Mammary epithelial cell (primary cell): ENCODE measurements at regions of chr12 and their contacts with region 1.

Region 1: DNA sequence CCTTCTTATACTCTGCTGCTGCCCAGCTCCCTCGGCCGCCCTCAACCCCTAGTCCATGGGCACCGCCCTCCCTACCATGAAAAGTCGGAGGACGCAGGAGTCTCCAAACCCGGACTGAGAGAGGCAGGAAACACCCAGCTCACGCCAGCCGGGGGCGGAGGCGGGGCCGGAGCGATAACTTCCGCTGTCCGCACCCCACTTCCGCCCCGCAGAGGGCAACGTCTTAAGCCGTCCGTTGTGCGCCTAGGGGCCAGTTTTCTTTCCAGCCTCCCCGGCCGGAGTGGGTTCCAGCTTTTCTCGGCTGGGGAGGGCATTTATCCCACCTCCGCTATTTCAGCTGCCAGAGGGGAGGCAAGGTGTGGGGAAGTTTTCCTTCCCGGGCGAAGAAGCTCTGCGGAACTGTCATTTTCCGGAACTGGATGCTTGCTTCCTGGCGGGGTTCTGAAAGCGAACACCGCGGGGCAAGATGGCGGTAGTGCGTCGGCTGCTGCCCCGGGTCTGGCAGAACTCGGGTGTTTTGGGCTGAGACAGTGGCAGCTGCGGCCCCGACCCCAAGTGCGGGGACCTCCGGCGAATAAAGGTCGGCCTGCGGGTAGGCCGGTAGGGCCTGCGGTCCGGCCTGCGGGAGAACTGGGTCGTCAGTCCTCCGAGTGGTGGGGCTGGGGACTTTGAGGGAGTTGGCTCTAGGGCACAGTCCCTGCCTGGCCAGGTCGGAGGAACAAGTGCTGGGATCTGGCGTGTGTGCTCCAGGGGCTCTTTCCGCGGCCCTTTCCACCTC is at the starts of genes KCTD10 and UBE3B:
- DNase-seq: peak; percentile 84
- H3K4me3 ChIP-seq: peak within 1 kb of the TSS; percentile 75 to 85 (median 76)
- H3K27ac ChIP-seq: peak within 1 kb of the TSS; percentile 88
- H3K4me1 ChIP-seq: peaks cover 29% of the 10 kb centered on the region
- H3K27me3 ChIP-seq: no peaks in the 10 kb centered on the region
- CTCF ChIP-seq: no peak
- total RNA-seq, gene KCTD10: 71.2 to 125 TPM
- total RNA-seq, gene UBE3B: 31.2 to 53.7 TPM

Region 2: DNA sequence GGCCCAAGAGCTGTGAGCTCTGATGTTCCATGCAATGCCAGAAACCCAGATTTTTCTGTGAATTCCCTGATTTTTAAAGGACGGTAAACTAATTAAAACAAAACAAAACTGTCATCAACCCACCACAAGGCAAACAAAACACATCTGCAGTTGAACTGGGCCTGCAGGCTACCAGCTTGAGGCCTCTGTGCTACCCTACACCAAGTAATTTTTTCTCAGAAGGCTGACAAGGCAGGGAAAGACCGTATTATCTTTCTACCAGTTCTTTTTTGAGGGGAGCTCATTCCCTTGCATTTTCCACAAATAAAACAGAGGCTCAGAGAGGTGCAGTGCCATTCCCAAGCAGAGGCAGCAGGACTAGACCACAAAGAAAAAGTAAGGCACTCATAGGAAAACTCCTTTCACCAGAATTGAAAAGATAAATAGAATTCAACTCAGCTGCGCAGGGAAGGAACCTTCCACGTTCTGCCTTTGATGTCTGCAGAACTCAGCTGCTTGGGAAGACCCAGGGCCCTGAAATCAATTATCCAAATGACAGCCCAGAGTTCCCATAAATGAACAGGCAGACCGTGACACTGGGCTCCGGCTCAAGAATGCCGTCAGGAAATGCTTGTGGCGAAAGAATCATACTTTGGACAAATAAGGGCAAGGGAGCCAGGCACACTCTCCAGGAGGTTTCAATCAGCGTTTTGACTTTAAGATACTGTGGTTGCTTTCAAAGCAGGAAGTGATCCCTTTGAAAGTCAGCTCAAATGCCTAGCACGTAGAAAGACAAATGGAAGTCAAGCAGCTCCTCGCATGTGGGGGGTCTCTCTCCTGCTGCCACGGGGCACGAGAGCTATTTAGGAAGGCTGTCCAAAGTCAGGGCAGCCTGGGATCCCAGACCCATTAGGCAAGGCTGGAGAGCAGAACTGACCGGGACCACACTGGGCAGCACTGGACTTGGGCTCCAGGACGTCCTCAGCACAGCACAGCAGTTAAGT is 14.4 kb before region 1 on chr12:
- CTCF ChIA-PET with region 1: interaction called, 4 read pairs
- dilution Hi-C with region 1: no loop called
- in situ Hi-C with region 1: no loop called
- intact Hi-C with region 1: loop called (anchors 1 kb)
- DNase-seq: peak; percentile 76
- H3K4me3 ChIP-seq: peak overlapping the region in 2 of 3 experiments; percentile 6 to 10
- H3K27ac ChIP-seq: peak overlapping the region; percentile 62
- H3K4me1 ChIP-seq: peaks cover 48% of the 10 kb centered on the region
- H3K27me3 ChIP-seq: no peaks in the 10 kb centered on the region
- CTCF ChIP-seq: no peak

Region 3: GRCh38 chr12:109573029-109573913 is 95.9 kb after region 1 on chr12 and contains the starts of genes MMAB and MVK:
- CTCF ChIA-PET with region 1: no interaction called
- dilution Hi-C with region 1: no loop called
- in situ Hi-C with region 1: no loop called
- intact Hi-C with region 1: loop called (anchors 5 kb)
- DNase-seq: peak; percentile 100
- H3K4me3 ChIP-seq: peak within 1 kb of the TSS; percentile 72 to 90 (median 82)
- H3K27ac ChIP-seq: peak within 1 kb of the TSS; percentile 79
- H3K4me1 ChIP-seq: peaks cover 23% of the 10 kb centered on the region
- H3K27me3 ChIP-seq: no peaks in the 10 kb centered on the region
- CTCF ChIP-seq: no peak
- total RNA-seq, gene MMAB: 27.5 to 67.8 TPM
- total RNA-seq, gene MVK: 26.8 to 51.5 TPM